ENCODE measurements at regions of chr3 and their contacts with region 1.

Region 1: GRCh38 chr3:66938338-66938963 is 59.7 kb upstream of the KBTBD8 start:
- DNase-seq: peak; percentile 33 to 42 (median 34)
- H3K4me3 ChIP-seq: no peak overlapping the region
- H3K4me3 Mint-ChIP-seq: no peak overlapping the region
- H3K27ac ChIP-seq: no peak overlapping the region
- H3K27ac Mint-ChIP-seq: no peak overlapping the region
- H3K4me1 ChIP-seq: no peaks in the 10 kb centered on the region
- H3K4me1 Mint-ChIP-seq: no peaks in the 10 kb centered on the region
- H3K27me3 ChIP-seq: no peaks in the 10 kb centered on the region
- H3K27me3 Mint-ChIP-seq: peaks cover 6 to 9% of the 10 kb centered on the region in 2 donors

Region 2: GRCh38 chr3:67037615-67038014 is 99.2 kb after region 1 on chr3:
- CTCF ChIA-PET with region 1: interaction called, 4 read pairs
- POLR2A ChIA-PET with region 1: no interaction called
- intact Hi-C with region 1: loop called (anchors 5 kb)
- DNase-seq: no peak
- H3K4me3 ChIP-seq: no peak overlapping the region
- H3K4me3 Mint-ChIP-seq: no peak overlapping the region
- H3K27ac ChIP-seq: no peak overlapping the region
- H3K27ac Mint-ChIP-seq: no peak overlapping the region
- H3K4me1 ChIP-seq: no peaks in the 10 kb centered on the region
- H3K4me1 Mint-ChIP-seq: no peaks in the 10 kb centered on the region
- H3K27me3 ChIP-seq: no peaks in the 10 kb centered on the region
- H3K27me3 Mint-ChIP-seq: peaks cover 0 to 5% of the 10 kb centered on the region in 2 donors

Region 3: DNA sequence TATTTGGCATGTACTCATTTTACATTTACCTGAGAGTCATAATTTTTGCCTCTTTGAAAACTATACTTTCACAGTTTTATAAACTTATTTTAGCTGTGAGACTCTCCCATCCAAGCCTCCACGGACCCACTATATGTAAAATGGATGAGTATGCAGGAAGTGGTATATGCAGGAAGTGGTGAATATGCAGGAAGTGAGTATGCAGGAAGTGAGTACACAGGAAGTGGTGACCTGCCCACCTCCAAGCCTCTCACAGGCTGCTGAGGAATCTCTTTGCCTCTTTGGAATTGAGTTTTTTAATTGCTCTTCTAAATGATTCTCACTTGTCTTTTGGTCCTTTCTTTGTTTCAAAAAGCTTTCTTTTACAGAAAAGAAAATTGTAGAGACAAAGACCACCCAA is 144.8 kb after region 1 on chr3:
- CTCF ChIA-PET with region 1: no interaction called
- POLR2A ChIA-PET with region 1: no interaction called
- intact Hi-C with region 1: no loop called
- DNase-seq: peak; percentile 53 to 75 (median 74)
- H3K4me3 ChIP-seq: peak overlapping the region in 1 of 2 donors; percentile 22
- H3K4me3 Mint-ChIP-seq: peak overlapping the region; percentile 52 to 87 (median 79)
- H3K27ac ChIP-seq: peak overlapping the region; percentile 7
- H3K27ac Mint-ChIP-seq: peak overlapping the region; percentile 37 to 98 (median 80)
- H3K4me1 ChIP-seq: peaks cover 23% of the 10 kb centered on the region
- H3K4me1 Mint-ChIP-seq: peaks cover 21 to 41% (median 27%) of the 10 kb centered on the region in 4 donors
- H3K27me3 ChIP-seq: no peaks in the 10 kb centered on the region
- H3K27me3 Mint-ChIP-seq: peaks cover 0 to 4% of the 10 kb centered on the region in 2 donors

Region 4: DNA sequence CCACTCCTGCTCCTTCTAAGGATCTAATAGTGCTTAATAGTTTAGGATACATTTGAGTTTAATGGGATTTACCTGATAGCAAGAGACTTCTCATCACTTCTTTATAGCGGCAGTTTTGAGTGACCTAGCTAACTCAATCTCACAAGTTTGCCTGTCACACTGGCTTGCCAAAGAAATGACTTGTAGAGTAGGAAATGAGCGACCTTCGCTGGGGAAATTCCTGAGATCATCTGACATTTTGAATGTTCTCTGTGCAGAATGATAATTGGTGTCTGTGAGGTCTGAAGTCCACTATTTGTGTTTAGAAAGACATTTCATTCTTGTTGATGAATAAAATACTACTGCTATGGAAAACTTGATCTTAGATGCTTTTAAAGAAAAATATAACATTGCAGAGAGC is 685.6 kb after region 1 on chr3:
- CTCF ChIA-PET with region 1: no interaction called
- POLR2A ChIA-PET with region 1: no interaction called
- intact Hi-C with region 1: no loop called
- DNase-seq: no peak
- H3K4me3 ChIP-seq: no peak overlapping the region
- H3K4me3 Mint-ChIP-seq: no peak overlapping the region
- H3K27ac ChIP-seq: no peak overlapping the region
- H3K27ac Mint-ChIP-seq: no peak overlapping the region
- H3K4me1 ChIP-seq: peaks cover 5% of the 10 kb centered on the region
- H3K4me1 Mint-ChIP-seq: peaks cover 26 to 72% (median 53%) of the 10 kb centered on the region in 4 donors
- H3K27me3 ChIP-seq: no peaks in the 10 kb centered on the region
- H3K27me3 Mint-ChIP-seq: no peaks in the 10 kb centered on the region

Region 5: GRCh38 chr3:68893600-68894239 is 1955.3 kb after region 1 on chr3:
- CTCF ChIA-PET with region 1: interaction called, 14 read pairs
- POLR2A ChIA-PET with region 1: no interaction called
- intact Hi-C with region 1: loop called (anchors 1 kb)
- DNase-seq: peak in 4 of 5 donors; percentile 29 to 36 (median 32)
- H3K4me3 ChIP-seq: no peak overlapping the region
- H3K4me3 Mint-ChIP-seq: no peak overlapping the region
- H3K27ac ChIP-seq: no peak overlapping the region
- H3K27ac Mint-ChIP-seq: no peak overlapping the region
- H3K4me1 ChIP-seq: no peaks in the 10 kb centered on the region
- H3K4me1 Mint-ChIP-seq: no peaks in the 10 kb centered on the region
- H3K27me3 ChIP-seq: no peaks in the 10 kb centered on the region
- H3K27me3 Mint-ChIP-seq: peaks cover 7 to 14% of the 10 kb centered on the region in 2 donors

Measured in CD4-positive, alpha-beta memory T cell (primary cell).